ENCODE measurements at regions of chr2 and their contacts with region 1.

Region 1: GRCh38 chr2:11688222-11689069 is 18.5 kb upstream of the NTSR2 start:
- DNase-seq: peak; percentile 81
- H3K4me3 Mint-ChIP-seq: peak overlapping the region; percentile 70
- H3K27ac Mint-ChIP-seq: peak overlapping the region; percentile 37
- H3K4me1 Mint-ChIP-seq: peaks cover 10% of the 10 kb centered on the region
- H3K27me3 Mint-ChIP-seq: peaks cover 16% of the 10 kb centered on the region
- CTCF ChIP-seq: peak; percentile 82

Region 2: DNA sequence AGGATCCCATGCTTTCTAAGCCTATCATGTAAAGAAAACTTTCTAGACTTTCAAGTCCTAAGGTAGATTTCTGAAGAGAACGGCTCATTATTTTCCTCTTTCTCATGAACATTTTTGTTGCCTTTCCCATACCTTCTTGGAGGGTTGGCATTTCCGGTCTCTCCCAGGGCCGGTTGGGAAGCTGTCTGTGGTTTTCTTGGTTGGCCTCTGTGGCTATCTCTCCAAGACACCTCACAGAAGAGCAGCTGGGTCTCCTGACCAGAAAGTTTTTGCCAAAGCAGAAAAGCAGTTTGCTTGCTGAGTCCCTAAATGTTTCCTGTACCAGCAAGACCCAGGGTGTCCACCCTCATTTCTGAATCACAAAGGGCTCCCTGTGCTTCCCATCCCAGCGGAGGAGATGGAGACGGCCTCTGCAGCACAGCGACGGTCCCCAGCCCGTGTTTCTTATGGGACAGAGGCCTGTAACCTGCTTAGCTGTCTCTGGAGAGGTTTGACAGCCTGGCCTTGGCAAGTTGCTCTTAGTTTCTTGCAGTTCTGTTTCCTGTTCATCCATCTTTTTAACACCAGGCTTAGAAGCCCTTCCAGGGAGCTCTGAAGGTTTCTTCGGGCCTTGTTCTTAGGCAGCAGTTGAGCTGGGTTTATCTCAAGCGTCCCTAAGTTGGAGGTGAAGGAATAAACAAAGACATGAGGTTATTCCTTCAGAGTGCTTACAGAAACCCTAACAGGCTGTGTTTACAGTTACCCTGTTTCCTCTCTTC is 114.8 kb before region 1 on chr2:
- CTCF ChIA-PET with region 1: no interaction called
- POLR2A ChIA-PET with region 1: no interaction called
- intact Hi-C with region 1: no loop called
- DNase-seq: peak; percentile 33
- H3K4me3 Mint-ChIP-seq: no peak overlapping the region
- H3K27ac Mint-ChIP-seq: no peak overlapping the region
- H3K4me1 Mint-ChIP-seq: peaks cover 7% of the 10 kb centered on the region
- H3K27me3 Mint-ChIP-seq: no peaks in the 10 kb centered on the region
- CTCF ChIP-seq: no peak

Region 3: GRCh38 chr2:11710234-11710975 is 22.0 kb after region 1 on chr2:
- CTCF ChIA-PET with region 1: interaction called, 11 read pairs
- POLR2A ChIA-PET with region 1: interaction called, 4 read pairs
- intact Hi-C with region 1: no loop called
- DNase-seq: peak; percentile 74
- H3K4me3 Mint-ChIP-seq: no peak overlapping the region
- H3K27ac Mint-ChIP-seq: no peak overlapping the region
- H3K4me1 Mint-ChIP-seq: peaks cover 14% of the 10 kb centered on the region
- H3K27me3 Mint-ChIP-seq: no peaks in the 10 kb centered on the region
- CTCF ChIP-seq: no peak

Region 4: GRCh38 chr2:11738589-11739436 is 50.4 kb after region 1 on chr2:
- CTCF ChIA-PET with region 1: interaction called, 45 read pairs
- POLR2A ChIA-PET with region 1: interaction called, 67 read pairs
- intact Hi-C with region 1: loop called (anchors 2 kb)
- DNase-seq: peak; percentile 85
- H3K4me3 Mint-ChIP-seq: no peak overlapping the region
- H3K27ac Mint-ChIP-seq: peak overlapping the region; percentile 44
- H3K4me1 Mint-ChIP-seq: peaks cover 19% of the 10 kb centered on the region
- H3K27me3 Mint-ChIP-seq: no peaks in the 10 kb centered on the region
- CTCF ChIP-seq: peak; percentile 38

Region 5: GRCh38 chr2:11743846-11744553 is 55.6 kb after region 1 on chr2:
- CTCF ChIA-PET with region 1: interaction called, 45 read pairs
- POLR2A ChIA-PET with region 1: interaction called, 67 read pairs
- intact Hi-C with region 1: loop called (anchors 2 kb)
- DNase-seq: peak; percentile 99
- H3K4me3 Mint-ChIP-seq: peak overlapping the region; percentile 33
- H3K27ac Mint-ChIP-seq: peak overlapping the region; percentile 82
- H3K4me1 Mint-ChIP-seq: peaks cover 29% of the 10 kb centered on the region
- H3K27me3 Mint-ChIP-seq: no peaks in the 10 kb centered on the region
- CTCF ChIP-seq: no peak